ENCODE measurements at regions of chr10 and their contacts with region 1.

Region 1: DNA sequence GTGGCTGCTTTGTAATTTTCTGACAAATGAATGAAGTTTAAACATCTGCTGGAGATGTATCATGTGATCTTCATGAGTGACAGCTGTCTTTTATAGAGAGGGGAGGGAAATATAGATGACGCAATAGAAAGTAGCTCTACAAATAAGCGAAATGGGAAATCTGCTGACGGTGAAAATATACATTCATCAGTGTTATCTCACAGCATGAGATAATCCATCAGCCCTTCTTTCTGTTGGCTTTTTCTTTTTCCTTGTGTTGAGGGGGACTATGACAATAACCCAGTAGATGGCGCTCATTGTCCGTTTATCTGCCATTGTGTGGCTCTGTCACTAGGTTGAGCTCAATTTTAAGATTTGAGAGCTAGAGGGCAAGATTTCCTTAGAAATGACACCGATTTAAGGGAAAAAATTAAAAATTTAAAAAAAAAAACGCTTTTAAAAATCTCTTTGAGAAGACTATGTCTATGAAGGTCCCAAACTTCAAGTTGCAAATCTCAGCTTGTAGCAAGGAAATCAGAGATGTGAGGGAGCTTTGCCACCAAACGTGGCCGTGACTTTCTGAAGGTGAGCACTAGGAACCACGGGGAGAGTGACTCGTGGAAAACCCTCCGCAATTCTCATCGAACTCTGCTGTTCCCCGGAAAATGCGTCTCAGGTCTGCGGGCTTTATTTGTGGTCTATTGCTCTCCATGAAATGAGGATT is 114.6 kb upstream of the SFMBT2 start:
- DNase-seq: peak; percentile 58
- H3K4me3 ChIP-seq: no peak overlapping the region
- H3K27ac ChIP-seq: no peak overlapping the region
- H3K4me1 ChIP-seq: no peaks in the 10 kb centered on the region
- H3K27me3 ChIP-seq: peaks cover 3% of the 10 kb centered on the region
- CTCF ChIP-seq: peak; percentile 33 to 91 (median 84)
- POLR2A ChIP-seq: no peak

Region 2: GRCh38 chr10:7687228-7687907 is 161.9 kb after region 1 on chr10:
- intact Hi-C with region 1: loop called (anchors 2 kb)
- DNase-seq: peak; percentile 81
- H3K4me3 ChIP-seq: no peak overlapping the region
- H3K27ac ChIP-seq: no peak overlapping the region
- H3K4me1 ChIP-seq: no peaks in the 10 kb centered on the region
- H3K27me3 ChIP-seq: no peaks in the 10 kb centered on the region
- CTCF ChIP-seq: peak; percentile 56 to 95 (median 90)
- POLR2A ChIP-seq: no peak

Region 3: GRCh38 chr10:9302120-9302746 is 1776.8 kb after region 1 on chr10:
- intact Hi-C with region 1: loop called (anchors 10 kb)
- DNase-seq: peak; percentile 22
- H3K4me3 ChIP-seq: no peak overlapping the region
- H3K27ac ChIP-seq: no peak overlapping the region
- H3K4me1 ChIP-seq: no peaks in the 10 kb centered on the region
- H3K27me3 ChIP-seq: no peaks in the 10 kb centered on the region
- CTCF ChIP-seq: peak in 3 of 4 experiments; percentile 53 to 68 (median 57)
- POLR2A ChIP-seq: no peak